OCI-LY7 (cell line): ENCODE measurements at regions of chr1 and their contacts with region 1.

Region 1: GRCh38 chr1:198681831-198682759 is 43.3 kb downstream of the PTPRC start:
- DNase-seq: peak; percentile 98
- H3K4me3 ChIP-seq: peak overlapping the region; percentile 59
- H3K27ac ChIP-seq: peak overlapping the region; percentile 99
- H3K4me1 ChIP-seq: peaks cover 98% of the 10 kb centered on the region
- CTCF ChIP-seq: no peak

Region 2: GRCh38 chr1:198096390-198096789 is 585.7 kb before region 1 on chr1:
- CTCF ChIA-PET with region 1: no interaction called
- POLR2A ChIA-PET with region 1: no interaction called
- intact Hi-C with region 1: no loop called
- DNase-seq: no peak
- H3K4me3 ChIP-seq: no peak overlapping the region
- H3K27ac ChIP-seq: no peak overlapping the region
- H3K4me1 ChIP-seq: no peaks in the 10 kb centered on the region
- CTCF ChIP-seq: no peak

Region 3: DNA sequence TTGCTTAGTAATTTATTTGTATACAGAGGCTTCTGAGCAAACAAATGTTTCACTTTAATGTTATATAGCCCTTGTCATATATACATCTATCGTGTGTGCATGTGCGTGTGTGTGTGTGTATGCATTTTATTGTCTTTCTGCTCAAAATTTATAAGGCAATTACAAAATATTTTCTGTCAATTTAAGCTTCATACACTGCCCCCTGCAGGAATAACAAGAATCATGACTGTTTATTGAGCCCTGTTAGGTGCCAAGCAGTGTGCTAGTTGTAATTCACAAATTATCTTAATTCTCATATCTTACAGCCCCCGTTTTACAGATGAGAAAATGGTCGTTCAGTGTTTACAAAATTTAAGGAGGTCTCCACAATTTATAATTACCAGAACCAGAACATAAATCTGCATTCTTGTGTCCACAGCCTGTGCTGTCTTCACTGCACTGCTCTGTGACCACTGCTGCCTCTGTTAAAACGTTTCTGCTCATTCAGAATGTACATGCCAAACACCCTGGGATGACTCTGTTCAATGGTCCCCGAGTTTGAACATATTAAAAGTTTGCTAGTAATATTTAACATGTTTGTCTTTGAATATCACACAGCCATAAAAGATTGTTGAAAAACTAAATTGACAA is 323.0 kb before region 1 on chr1:
- CTCF ChIA-PET with region 1: no interaction called
- POLR2A ChIA-PET with region 1: no interaction called
- intact Hi-C with region 1: loop called (anchors 10 kb)
- DNase-seq: peak; percentile 25
- H3K4me3 ChIP-seq: no peak overlapping the region
- H3K27ac ChIP-seq: no peak overlapping the region
- H3K4me1 ChIP-seq: no peaks in the 10 kb centered on the region
- CTCF ChIP-seq: peak; percentile 82

Region 4: DNA sequence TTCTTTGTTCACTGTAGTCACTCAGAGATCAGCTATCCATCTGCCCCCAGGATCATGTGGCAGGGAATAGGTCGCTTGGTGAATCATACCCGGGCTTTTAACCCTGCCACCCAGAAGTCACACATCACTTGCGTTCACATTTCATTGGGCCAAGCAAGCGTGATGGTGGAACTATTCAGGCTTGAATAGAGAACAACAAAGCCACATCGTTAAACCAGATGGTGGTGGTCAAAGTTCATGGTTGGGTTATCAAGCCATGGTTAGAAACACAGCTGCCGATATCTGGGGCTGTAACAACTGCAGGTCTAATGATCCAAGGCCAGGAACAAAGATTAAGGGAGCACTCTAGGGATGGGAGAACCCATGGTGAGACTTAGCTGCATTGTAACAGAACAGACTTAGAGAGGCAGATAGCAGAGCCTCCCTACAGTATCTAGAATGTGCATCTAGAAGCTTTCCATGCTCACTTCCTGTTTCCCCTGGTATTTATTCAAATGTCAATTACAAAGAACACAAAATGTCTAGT is 83.2 kb before region 1 on chr1:
- CTCF ChIA-PET with region 1: interaction called, 3 read pairs
- POLR2A ChIA-PET with region 1: interaction called, 66 read pairs
- intact Hi-C with region 1: loop called (anchors 1 kb)
- DNase-seq: peak; percentile 99
- H3K4me3 ChIP-seq: peak overlapping the region; percentile 76
- H3K27ac ChIP-seq: peak overlapping the region; percentile 90
- H3K4me1 ChIP-seq: peaks cover 53% of the 10 kb centered on the region
- CTCF ChIP-seq: 0 out of 2 replicates have a peak, but pooled peaks have one; percentile 14

Region 5: GRCh38 chr1:198638894-198639635 is 43.0 kb before region 1 on chr1 and contains the start of gene PTPRC:
- CTCF ChIA-PET with region 1: interaction called, 5 read pairs
- POLR2A ChIA-PET with region 1: interaction called, 115 read pairs
- intact Hi-C with region 1: loop called (anchors 1 kb)
- DNase-seq: peak; percentile 88
- H3K4me3 ChIP-seq: peak within 1 kb of the TSS; percentile 87
- H3K27ac ChIP-seq: peak within 1 kb of the TSS; percentile 96
- H3K4me1 ChIP-seq: peaks cover 63% of the 10 kb centered on the region
- CTCF ChIP-seq: no peak
- total RNA-seq, gene PTPRC: 161 and 177 TPM in 2 replicates

Region 6: GRCh38 chr1:198669023-198669698 is 12.9 kb before region 1 on chr1:
- CTCF ChIA-PET with region 1: interaction called, 3 read pairs
- POLR2A ChIA-PET with region 1: interaction called, 36 read pairs
- intact Hi-C with region 1: loop called (anchors 1 kb)
- DNase-seq: no peak
- H3K4me3 ChIP-seq: no peak overlapping the region
- H3K27ac ChIP-seq: no peak overlapping the region
- H3K4me1 ChIP-seq: peaks cover 85% of the 10 kb centered on the region
- CTCF ChIP-seq: no peak

Region 7: GRCh38 chr1:198708761-198709525 is 26.8 kb after region 1 on chr1:
- CTCF ChIA-PET with region 1: no interaction called
- POLR2A ChIA-PET with region 1: no interaction called
- intact Hi-C with region 1: no loop called
- DNase-seq: no peak
- H3K4me3 ChIP-seq: no peak overlapping the region
- H3K27ac ChIP-seq: no peak overlapping the region
- H3K4me1 ChIP-seq: no peaks in the 10 kb centered on the region
- CTCF ChIP-seq: no peak

Region 8: DNA sequence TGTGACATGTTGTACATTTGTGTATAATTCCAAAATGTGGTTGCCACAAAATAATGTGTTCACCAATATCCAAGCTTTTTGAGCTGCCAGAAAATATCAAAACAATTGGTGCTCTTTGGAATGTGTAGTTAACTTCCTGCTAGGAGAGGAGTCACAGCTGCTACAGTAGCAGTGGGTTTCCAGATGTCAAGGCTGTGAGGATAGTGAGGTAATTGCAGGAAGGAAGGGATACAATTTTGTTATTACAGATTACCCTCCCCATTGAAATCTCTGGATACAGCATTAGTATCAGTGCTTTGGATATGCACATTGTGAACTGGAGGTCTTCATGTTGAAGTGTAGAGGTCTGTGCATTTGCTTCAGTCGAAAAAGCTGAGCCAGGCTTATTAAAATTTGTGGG is 210.0 kb after region 1 on chr1:
- CTCF ChIA-PET with region 1: no interaction called
- POLR2A ChIA-PET with region 1: no interaction called
- intact Hi-C with region 1: no loop called
- DNase-seq: no peak
- H3K4me3 ChIP-seq: no peak overlapping the region
- H3K27ac ChIP-seq: no peak overlapping the region
- H3K4me1 ChIP-seq: peaks cover 1% of the 10 kb centered on the region
- CTCF ChIP-seq: no peak

Region 9: GRCh38 chr1:198937231-198938031 is 255.3 kb after region 1 on chr1:
- CTCF ChIA-PET with region 1: interaction called, 3 read pairs
- POLR2A ChIA-PET with region 1: interaction called, 19 read pairs
- intact Hi-C with region 1: loop called (anchors 5 kb)
- DNase-seq: peak; percentile 94
- H3K4me3 ChIP-seq: peak overlapping the region; percentile 78
- H3K27ac ChIP-seq: peak overlapping the region; percentile 88
- H3K4me1 ChIP-seq: peaks cover 29% of the 10 kb centered on the region
- CTCF ChIP-seq: no peak